Activated T-helper 2 cell treated with anti-CD3 and anti-CD28 coated beads, Interferon-gamma antibody, Interleukin-2, Interleukin-4, amounts not matched to agents 10 μg/mL and 5 μg/mL and 100 μg/mL, durations not matched to agents 14 hours and 24 hours and 36 hours (primary cell): ENCODE measurements at regions of chr22 and their contacts with region 1.

Region 1: DNA sequence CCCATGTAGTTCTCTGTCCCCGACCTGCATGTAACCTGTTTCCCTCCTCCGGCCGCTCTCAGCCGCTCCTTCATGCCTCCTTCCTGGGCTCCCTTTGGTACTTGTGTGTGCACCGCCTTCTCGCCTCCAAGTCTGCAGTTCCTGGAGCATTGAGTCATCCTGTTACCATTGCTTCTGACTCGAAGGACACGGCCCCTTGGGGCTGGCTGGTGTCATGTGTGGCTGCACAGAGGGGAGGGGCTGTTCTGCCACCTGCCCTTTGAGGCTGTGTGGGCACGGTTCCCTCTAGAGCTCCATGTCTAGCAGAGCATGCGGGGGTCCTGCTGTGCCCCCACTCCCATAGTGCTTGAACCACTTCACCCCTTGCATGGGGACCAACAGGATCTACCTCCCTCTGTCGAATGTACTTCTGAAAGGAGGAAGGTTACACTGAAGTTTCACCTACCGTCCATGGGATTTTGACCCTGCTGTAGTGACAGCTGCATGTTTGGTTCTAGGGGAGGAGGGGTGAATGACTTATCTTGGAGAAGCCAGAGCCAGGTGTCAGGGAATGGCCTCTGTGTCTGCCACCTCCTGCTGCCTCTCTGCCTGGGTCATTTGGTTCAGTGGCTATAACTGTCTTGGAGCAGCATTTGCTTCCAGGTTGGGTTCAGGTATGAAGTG is 39.6 kb downstream of the BCR start:
- DNase-seq: peak; percentile 40
- H3K4me3 Mint-ChIP-seq: peak overlapping the region; percentile 70
- H3K27ac Mint-ChIP-seq: peak overlapping the region; percentile 86
- H3K4me1 Mint-ChIP-seq: peaks cover 80% of the 10 kb centered on the region
- H3K27me3 Mint-ChIP-seq: no peaks in the 10 kb centered on the region

Region 2: DNA sequence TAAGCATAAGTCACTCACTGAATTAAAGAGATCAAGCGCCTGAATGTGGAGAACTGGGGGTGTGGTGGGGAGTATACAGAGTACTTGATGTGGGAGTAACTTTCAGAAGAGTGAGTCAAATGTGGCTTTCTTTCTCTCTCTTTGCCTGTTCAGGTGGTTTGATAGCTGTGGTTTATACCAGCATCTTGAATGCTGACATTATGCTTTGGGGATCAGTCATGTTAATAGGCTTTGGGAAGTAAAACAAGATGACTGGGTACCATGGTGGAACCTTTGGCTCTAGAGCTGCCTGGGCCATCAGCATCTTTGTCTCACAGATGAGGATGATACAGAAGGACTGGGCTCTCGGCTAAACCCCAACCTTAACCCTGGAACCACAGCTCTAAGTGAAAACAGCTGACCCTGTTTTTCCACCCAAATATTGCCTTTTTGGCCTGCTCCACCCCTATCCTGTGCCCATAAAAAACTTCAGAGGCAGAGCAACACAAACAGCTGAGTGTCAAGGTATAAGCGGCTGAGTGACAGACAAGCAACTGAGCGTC is 207.8 kb before region 1 on chr22:
- intact Hi-C with region 1: loop called (anchors 5 kb)
- DNase-seq: peak; percentile 27
- H3K4me3 Mint-ChIP-seq: no peak overlapping the region
- H3K27ac Mint-ChIP-seq: peak overlapping the region; percentile 60
- H3K4me1 Mint-ChIP-seq: peaks cover 29% of the 10 kb centered on the region
- H3K27me3 Mint-ChIP-seq: peaks cover 33% of the 10 kb centered on the region

Region 3: DNA sequence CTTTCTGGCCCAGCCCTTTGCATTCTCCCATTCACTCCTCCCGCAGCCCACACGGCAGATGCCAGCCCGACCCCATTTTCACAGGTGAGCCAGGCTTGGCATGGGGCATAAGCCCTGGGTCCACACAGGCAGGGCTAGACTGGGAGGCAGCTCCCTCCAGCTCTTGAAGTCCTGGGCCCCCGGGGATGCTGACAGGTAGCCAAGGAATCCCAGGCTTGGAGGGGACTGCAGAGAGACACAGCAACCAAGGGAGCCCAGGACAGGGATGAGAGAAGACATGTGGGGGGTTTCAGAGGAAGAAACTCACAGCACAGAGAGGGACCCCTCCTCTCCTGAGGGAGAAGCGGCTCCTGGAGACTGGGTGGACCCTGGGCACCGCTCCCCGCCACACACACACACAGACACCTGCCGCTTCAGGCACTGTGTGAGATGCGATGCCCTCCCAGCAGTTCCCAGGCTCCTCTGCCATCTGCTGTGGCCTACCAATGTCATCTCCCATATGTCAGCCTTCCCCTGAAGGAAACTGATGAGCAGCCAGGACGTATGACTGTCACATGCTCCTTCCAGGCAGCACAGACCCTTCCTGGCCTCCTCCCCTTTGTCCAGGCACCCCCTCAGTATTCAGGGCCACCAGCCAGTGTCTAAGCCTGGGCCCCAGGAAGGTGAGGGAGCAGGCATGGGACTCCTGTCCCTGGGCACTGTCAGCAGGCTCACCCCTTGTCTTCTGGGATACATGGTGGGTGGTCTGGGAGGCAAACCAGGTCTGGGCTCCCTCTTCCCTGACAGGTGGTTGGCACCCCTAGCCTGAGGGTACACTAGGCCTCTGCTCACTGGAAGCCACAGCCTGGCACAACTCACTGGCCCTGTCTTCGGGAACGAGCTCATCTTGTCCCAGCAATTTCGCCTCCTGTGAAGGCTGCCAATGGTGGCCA is 51.6 kb before region 1 on chr22:
- intact Hi-C with region 1: no loop called
- DNase-seq: no peak
- H3K4me3 Mint-ChIP-seq: no peak overlapping the region
- H3K27ac Mint-ChIP-seq: no peak overlapping the region
- H3K4me1 Mint-ChIP-seq: no peaks in the 10 kb centered on the region
- H3K27me3 Mint-ChIP-seq: no peaks in the 10 kb centered on the region

Region 4: GRCh38 chr22:23240639-23241389 is 20.9 kb after region 1 on chr22:
- intact Hi-C with region 1: loop called (anchors 1 kb)
- DNase-seq: no peak
- H3K4me3 Mint-ChIP-seq: no peak overlapping the region
- H3K27ac Mint-ChIP-seq: peak overlapping the region; percentile 58
- H3K4me1 Mint-ChIP-seq: peaks cover 47% of the 10 kb centered on the region
- H3K27me3 Mint-ChIP-seq: no peaks in the 10 kb centered on the region